Heart left ventricle (tissue), 16 donors: ENCODE measurements at regions of chr13 and their contacts with region 1.

Region 1: DNA sequence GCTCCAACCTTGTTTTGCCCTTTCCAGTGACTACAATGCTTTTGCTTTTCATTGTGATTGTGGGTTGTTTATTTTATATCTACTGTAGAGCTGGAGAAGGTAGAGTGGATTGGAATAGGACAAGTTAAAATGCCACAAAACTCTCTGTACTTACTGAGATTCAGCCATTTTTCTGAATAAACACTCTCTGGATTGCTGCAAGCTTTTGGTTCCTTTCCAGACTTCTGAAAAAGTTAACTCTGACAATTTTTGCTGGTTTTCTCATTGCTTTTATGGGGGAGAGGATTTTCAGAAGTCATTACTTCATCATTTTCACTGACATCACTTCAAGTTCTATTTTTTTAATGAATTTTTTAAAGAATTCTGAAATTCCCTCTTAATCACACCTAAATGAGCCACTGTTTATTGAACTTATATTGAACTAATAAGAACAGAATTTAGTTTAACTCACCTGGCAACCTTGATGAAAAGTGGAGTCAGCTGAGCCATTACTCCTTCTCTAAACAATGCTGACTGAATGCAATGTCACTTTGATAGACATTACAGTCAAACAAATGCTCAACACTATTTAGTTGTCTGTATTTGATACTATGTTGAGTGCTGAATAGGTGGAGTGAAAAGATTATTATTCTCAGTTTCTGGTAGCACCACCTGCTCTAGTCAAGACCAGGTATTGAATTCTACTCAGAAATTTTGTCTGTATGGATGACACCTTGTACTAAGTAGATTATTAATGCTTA is 303.5 kb downstream of the DLEU7 start:
- DNase-seq: no peak
- ATAC-seq: no peak
- H3K4me3 ChIP-seq: no peak overlapping the region
- H3K27ac ChIP-seq: no peak overlapping the region
- H3K4me1 ChIP-seq: peaks cover 0 to 5% (median 0%) of the 10 kb centered on the region in 12 donors
- H3K27me3 ChIP-seq: no peaks in the 10 kb centered on the region
- CTCF ChIP-seq: no peak
- POLR2A ChIP-seq: no peak

Region 2: DNA sequence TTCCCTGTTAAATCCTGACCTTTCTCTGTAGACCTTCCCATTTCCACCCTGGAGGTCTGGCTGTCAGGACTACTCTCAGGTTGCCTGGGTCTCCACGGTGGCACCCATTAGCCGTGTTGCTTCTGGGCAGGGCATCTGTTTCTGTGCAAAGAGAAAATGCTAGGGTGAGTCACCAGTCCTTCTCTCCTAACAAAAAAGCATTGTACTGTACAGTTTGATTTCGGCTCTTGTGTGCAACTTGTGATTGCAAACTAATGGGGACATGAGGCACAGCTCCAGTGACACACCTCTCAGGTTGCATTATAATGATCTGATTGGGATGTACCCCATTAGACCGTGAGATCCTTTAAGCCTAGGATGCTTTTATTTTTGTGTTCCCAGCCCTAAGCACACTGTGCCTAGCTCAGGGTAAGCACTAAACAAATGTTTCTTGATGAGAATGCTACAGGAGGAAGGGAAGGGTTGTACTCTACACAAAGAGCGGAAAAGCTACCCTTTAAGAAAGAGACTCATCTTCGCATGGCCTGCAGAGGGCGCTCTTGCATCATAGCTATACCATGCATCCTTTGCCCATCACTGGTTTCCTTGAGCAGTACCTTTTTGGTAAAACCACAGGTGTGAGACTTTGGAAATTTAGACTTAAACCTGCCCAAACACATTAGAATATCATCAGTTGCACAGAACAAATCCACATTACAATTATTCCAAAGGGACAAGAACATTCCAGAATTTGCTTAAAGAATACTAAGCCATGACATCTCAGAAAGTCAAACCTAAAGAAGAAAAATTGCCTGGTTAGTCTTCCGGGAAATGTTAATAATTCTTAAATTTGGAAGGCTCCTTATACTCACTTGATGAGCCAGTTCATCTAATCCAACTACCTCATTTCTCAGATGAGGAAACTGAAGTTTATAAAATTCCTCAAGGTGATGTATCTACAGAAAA is 563.4 kb before region 1 on chr13:
- intact Hi-C with region 1: loop called in 2 of 10 experiments (anchors 5 to 10 kb)
- DNase-seq: peak; percentile 50 to 79 (median 66)
- ATAC-seq: peak in 3 of 4 donors; percentile 80 to 85 (median 81)
- H3K4me3 ChIP-seq: no peak overlapping the region
- H3K27ac ChIP-seq: no peak overlapping the region
- H3K4me1 ChIP-seq: peaks cover 0 to 5% (median 0%) of the 10 kb centered on the region in 12 donors
- H3K27me3 ChIP-seq: no peaks in the 10 kb centered on the region
- CTCF ChIP-seq: peak; percentile 59 to 92 (median 89)
- POLR2A ChIP-seq: no peak

Region 3: GRCh38 chr13:50437252-50437651 is 102.7 kb before region 1 on chr13:
- intact Hi-C with region 1: no loop called
- DNase-seq: no peak
- ATAC-seq: no peak
- H3K4me3 ChIP-seq: no peak overlapping the region
- H3K27ac ChIP-seq: no peak overlapping the region
- H3K4me1 ChIP-seq: no peaks in the 10 kb centered on the region
- H3K27me3 ChIP-seq: no peaks in the 10 kb centered on the region
- CTCF ChIP-seq: no peak
- POLR2A ChIP-seq: no peak

Region 4: GRCh38 chr13:50521831-50522149 is 18.2 kb before region 1 on chr13:
- intact Hi-C with region 1: no loop called
- DNase-seq: no peak
- ATAC-seq: peak; percentile 36 to 58 (median 48)
- H3K4me3 ChIP-seq: no peak overlapping the region
- H3K27ac ChIP-seq: peak overlapping the region in 5 of 12 donors; percentile 7 to 61 (median 16)
- H3K4me1 ChIP-seq: peaks cover 0 to 63% (median 18%) of the 10 kb centered on the region in 12 donors
- H3K27me3 ChIP-seq: no peaks in the 10 kb centered on the region
- CTCF ChIP-seq: no peak
- POLR2A ChIP-seq: no peak

Region 5: DNA sequence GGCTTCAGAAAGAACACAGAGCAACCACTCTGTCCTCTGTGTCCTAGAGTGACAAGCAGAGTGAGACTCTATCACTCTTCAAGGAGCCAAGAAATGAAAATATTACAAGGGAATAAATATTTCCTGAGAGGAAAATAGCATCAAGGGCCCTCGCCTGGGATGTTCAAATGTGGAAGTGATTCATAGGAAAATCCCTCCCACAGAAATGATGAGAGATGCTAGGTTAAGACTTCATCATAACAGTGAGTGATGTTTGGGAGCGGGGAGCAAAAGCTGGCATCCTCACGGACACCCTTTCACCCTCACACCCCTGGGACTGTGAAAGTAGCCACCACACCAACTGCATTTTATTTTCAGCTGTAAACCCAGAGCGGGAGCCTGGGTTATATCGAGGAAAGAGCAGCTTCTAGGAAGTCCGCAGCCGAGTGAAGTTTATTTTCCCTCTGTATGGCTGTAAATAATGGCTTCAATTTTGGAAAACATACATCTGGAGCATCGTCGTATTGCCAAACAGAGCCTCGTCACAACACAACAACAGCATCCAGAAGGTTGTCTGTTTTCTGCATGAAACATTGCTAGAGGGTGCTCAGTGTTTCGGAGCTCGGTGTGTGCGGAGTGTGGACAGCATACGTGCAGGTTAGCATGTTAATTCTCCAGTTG is 248.7 kb after region 1 on chr13:
- intact Hi-C with region 1: no loop called
- DNase-seq: no peak
- ATAC-seq: no peak
- H3K4me3 ChIP-seq: no peak overlapping the region
- H3K27ac ChIP-seq: no peak overlapping the region
- H3K4me1 ChIP-seq: peaks cover 0 to 5% (median 0%) of the 10 kb centered on the region in 12 donors
- H3K27me3 ChIP-seq: no peaks in the 10 kb centered on the region
- CTCF ChIP-seq: no peak
- POLR2A ChIP-seq: no peak